Pancreas (tissue), 10 donors: ENCODE measurements at regions of chr2 and their contacts with region 1.

Region 1: GRCh38 chr2:44186810-44187209 is 18.1 kb downstream of the PPM1B start:
- DNase-seq: no peak
- ATAC-seq: peak in 2 of 4 donors; percentile 31 to 46
- H3K4me3 ChIP-seq: no peak overlapping the region
- H3K27ac ChIP-seq: no peak overlapping the region
- H3K4me1 ChIP-seq: peaks cover 0 to 25% (median 21%) of the 10 kb centered on the region in 3 donors
- H3K27me3 ChIP-seq: no peaks in the 10 kb centered on the region
- CTCF ChIP-seq: no peak

Region 2: DNA sequence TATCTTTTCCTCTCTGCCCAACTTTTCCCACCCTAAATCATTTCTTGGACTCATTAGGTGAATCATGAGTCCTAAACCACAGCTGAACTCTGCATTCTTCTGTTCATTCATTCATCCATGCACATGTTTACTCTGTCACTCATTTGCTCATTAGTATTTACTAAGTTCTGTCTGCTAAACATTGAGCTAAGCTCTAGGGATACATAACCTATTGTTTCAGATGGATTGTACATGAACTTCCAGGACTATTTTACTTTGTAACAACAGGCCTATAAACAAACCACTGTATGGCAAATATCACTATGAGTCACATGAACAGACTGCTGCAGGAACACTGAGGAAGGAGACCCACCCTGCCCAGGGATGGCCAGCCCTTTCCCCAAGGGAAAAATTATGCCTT is 427.6 kb before region 1 on chr2:
- intact Hi-C with region 1: no loop called
- DNase-seq: no peak
- ATAC-seq: peak in 2 of 4 donors; percentile 14 to 32
- H3K4me3 ChIP-seq: no peak overlapping the region
- H3K27ac ChIP-seq: peak overlapping the region in 1 of 4 donors; percentile 18
- H3K4me1 ChIP-seq: no peaks in the 10 kb centered on the region
- H3K27me3 ChIP-seq: no peaks in the 10 kb centered on the region
- CTCF ChIP-seq: no peak

Region 3: DNA sequence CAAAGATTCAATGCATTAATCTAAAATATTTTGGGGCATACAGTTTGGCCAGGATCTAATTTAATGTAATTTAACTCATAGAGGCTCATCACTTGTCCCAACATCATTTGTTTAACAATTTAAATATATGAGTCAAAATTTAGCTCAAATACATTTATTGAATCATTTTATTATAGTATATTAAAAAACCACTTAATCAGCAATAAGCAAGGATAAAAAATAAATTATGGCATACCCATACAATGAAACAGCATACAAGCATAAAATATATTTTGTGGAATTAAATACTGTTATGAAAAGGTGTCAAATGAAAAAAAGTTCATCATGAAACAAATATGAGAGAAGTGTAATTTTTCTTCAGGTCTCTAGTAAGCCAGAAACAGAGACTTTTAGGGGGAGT is 225.9 kb before region 1 on chr2:
- intact Hi-C with region 1: loop called in 1 of 3 experiments (anchors 5 kb)
- DNase-seq: no peak
- ATAC-seq: no peak
- H3K4me3 ChIP-seq: no peak overlapping the region
- H3K27ac ChIP-seq: no peak overlapping the region
- H3K4me1 ChIP-seq: no peaks in the 10 kb centered on the region
- H3K27me3 ChIP-seq: no peaks in the 10 kb centered on the region
- CTCF ChIP-seq: no peak